BJ (cell line): ENCODE measurements at regions of chr16 and their contacts with region 1.

Region 1: DNA sequence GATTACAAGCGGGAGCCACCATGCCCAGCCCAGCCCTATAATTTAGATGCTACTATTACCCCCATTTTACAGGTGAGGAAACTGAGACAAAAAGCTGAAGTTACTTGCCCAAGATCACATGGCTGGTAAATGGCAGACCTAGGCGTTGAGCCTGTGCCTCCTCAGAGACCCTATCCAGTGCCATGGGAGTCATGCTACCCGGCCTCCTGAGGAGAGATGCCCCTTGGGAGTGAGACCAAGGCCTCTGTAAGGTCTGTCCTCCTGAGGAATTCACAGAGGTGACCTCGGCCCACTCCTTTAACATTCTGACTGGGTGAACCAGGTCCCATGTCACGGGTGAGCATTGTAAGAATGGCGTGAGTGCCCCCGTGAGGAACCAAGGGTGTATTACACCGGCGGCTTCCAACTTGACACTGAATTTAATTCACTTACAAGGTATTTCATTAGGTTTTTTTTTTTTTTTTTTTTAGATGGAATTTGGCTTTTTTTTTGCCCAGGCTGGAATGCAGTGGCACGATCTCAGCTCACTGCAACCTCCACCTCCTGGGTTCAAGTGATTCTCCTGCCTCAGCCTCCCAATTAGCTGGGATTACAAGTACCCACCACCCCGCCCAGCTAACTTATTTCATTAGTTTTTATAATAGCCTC is 95.7 kb downstream of the ABCC6 start:
- DNase-seq: peak; percentile 10
- H3K4me3 ChIP-seq: no peak overlapping the region
- H3K27me3 ChIP-seq: no peaks in the 10 kb centered on the region
- CTCF ChIP-seq: peak; percentile 85

Region 2: DNA sequence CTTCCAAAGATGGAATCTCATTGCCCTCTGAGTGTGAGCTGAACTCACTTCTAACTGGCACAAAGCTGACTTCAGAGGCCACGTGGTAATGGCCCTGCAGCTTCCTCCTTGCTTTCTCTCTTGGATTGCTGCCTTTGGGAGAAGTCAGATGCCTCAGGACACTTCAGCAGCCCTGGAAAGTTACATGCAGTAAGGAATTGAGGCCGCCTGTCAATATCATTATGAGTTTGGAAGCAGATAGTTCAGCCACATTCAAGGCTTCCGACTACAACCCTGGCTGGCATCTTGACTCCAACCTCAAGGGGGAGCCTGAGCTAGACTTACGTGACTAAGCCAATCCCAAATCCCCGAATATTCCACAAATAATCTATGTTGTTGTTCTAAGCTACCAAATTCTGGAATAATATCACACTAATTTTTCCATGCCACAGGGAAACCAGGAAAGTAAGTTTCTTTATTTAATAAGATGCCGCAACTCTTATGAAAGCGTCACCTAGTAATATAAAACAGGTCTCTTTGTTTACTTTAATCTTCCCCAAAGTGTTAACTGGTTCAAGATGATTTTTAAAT is 252.8 kb before region 1 on chr16:
- CTCF ChIA-PET with region 1: interaction called, 18 read pairs
- POLR2A ChIA-PET with region 1: no interaction called
- DNase-seq: no peak
- H3K4me3 ChIP-seq: no peak overlapping the region
- H3K27me3 ChIP-seq: no peaks in the 10 kb centered on the region
- CTCF ChIP-seq: peak; percentile 87

Region 3: DNA sequence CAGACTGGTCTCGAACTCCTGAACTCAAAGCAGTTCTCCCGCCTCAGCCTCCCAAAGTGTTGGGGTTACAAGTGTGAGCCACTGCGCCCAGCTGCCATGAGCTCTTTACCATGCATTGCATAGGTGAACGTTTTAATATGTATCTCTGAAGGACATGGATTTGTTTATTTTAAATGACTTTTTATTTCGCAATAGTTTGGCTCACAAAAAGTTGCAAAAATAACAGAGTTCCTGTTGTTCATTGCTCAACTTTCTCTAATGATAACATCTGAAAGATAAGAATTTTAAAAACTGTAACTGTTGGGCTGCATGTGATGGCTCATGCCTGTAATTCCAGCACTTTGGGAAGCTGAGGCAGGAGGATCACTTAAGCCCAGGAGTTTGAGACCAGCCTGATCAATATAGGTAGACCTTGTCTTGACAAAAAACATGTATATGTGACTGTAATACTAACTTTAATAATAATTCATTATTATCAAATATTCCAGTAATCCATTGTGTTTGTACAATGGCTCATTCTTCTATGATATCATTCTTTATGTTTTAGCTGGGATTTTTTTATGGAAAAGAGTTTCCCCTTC is 98.1 kb before region 1 on chr16:
- CTCF ChIA-PET with region 1: no interaction called
- POLR2A ChIA-PET with region 1: no interaction called
- DNase-seq: no peak
- H3K4me3 ChIP-seq: no peak overlapping the region
- H3K27me3 ChIP-seq: no peaks in the 10 kb centered on the region
- CTCF ChIP-seq: no peak

Region 4: GRCh38 chr16:16167927-16168326 is 40.3 kb after region 1 on chr16:
- CTCF ChIA-PET with region 1: no interaction called
- POLR2A ChIA-PET with region 1: no interaction called
- DNase-seq: no peak
- H3K4me3 ChIP-seq: no peak overlapping the region
- H3K27me3 ChIP-seq: no peaks in the 10 kb centered on the region
- CTCF ChIP-seq: no peak